ENCODE measurements at regions of chr7 and their contacts with region 1.

Region 1: DNA sequence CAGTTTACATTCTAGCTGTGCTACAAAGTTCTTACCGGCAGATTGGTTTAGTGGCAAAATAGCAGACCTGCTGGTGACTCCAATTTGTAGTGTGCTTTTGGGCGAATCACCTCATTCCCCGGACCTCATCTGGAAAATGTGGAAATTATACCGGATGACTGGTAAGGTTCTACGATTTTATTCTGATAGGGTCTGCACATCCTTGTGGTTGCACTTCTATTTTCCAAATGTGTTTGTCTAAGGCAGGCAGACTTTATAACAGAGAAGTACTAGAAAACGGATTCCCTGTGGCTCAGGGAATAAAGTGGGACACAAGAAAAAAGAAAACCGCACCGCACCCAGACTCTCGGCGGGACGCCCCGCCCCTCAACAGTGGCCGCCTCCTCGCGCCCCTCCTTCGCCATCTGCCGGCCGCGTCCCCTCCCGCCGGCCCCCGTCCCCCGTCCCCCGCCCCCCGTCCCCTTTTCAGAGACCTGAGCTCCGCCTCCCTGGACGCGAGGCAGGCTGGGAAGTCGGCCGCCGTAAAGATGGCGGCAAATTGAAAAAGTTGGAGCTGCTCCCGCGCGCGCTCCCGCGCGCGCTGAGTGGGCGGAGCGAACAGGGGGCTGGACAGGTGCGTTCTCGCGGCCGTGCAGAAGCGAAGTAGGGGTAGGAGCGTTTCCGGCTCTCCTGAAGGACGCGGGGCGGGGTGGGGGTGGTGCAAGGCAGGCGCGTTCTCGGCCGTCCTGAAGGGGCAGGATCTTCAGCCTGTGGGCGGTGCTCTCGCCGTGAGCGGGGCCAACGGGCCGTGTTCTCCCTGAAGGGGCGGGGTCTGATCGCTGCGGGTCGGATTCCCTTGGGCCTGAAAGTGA is 531 bp upstream of the CCM2 start:
- DNase-seq: peak; percentile 83 to 99
- ATAC-seq: peak; percentile 92 to 97
- H3K4me3 ChIP-seq: peak overlapping the region; percentile 85
- H3K27ac ChIP-seq: peak overlapping the region; percentile 84 to 91
- H3K4me1 ChIP-seq: peaks cover 10% of the 10 kb centered on the region
- CTCF ChIP-seq: no peak
- EP300 ChIP-seq: no peak
- POLR2A ChIP-seq: peak; percentile 62
- RAD21 ChIP-seq: peak in 1 of 2 experiments; percentile 25; a peak in 1 of 5 replicates

Region 2: DNA sequence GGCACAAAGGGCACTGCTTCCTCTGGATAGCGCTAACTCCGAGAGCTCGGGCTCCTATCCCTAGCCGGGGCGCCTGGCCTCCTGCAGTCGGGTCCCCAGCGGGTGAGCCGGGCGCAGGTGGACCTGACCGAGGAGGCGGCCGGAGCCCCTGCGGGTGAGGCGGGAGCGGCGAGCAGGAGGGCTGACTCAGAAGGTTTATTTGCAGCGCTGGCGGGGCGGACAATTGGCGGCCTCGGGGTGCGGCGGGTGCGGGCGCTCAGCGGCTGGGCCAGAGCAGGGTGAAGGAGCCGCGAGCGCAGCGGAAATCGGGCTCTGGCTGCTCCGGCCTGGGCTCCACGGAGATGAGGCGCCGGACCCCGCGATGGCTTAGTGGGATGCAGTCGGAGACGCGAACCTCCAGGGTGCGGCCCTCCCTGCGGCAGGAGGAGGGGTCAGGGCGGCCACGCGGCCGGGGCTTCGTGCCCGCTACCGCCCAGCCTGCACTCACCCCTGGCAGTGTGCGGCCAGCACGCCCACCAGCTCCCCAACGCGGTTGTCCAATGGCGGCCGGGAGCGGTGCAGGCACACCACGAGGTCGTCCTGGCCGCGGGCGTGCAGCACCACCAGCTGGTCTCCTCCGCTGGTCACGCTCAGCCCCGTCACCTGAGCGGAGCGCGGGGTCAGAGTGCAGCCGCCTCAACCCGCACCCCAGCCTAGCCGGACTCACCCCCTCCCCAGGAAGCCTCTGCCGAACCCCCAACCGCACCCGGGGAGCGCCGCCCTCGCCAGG is 36.8 kb before region 1 on chr7:
- CTCF ChIA-PET with region 1: no interaction called
- POLR2A ChIA-PET with region 1: no interaction called
- DNase-seq: no peak
- ATAC-seq: no peak; a peak in 1 of 6 replicates
- H3K4me3 ChIP-seq: no peak overlapping the region
- H3K27ac ChIP-seq: no peak overlapping the region
- H3K4me1 ChIP-seq: no peaks in the 10 kb centered on the region
- CTCF ChIP-seq: no peak
- EP300 ChIP-seq: no peak
- POLR2A ChIP-seq: no peak
- RAD21 ChIP-seq: no peak

Region 3: DNA sequence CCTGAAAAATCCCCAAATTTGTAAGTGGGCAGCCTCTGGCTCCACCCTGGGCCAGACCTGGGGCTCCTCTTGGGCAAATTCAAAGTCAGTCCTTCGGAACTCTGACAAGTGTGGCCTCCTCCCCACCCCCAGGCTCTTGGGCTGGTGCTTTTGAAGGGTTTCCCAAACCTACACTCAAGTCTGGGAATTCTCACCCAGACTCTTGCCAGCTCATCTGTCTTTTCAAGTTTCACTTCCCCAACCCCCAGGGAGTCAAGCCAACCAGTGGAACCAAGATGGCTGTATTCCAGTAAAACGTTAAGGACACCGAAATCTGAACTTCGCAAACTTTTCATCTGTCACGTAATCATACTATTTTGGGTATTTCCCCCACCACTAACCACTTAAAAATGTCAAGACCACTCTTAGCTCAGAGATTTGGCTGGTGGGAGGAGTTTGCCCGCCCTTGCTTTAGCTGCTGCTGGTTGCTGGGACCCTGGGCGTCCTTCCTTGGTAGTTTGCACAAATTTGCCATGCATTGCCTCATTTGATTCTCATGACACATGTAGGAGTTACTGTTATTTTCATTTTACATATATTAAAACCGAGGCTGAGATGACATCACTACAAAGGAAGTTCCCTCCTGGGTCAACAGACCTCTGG is 19.0 kb before region 1 on chr7:
- CTCF ChIA-PET with region 1: interaction called, 11 read pairs
- POLR2A ChIA-PET with region 1: interaction called, 12 read pairs
- DNase-seq: no peak
- ATAC-seq: peak in 1 of 2 experiments; percentile 5; a peak in 2 of 6 replicates
- H3K4me3 ChIP-seq: no peak overlapping the region
- H3K27ac ChIP-seq: no peak overlapping the region; a peak in 1 of 6 replicates
- H3K4me1 ChIP-seq: peaks cover 37% of the 10 kb centered on the region
- CTCF ChIP-seq: no peak
- EP300 ChIP-seq: no peak
- POLR2A ChIP-seq: no peak
- RAD21 ChIP-seq: no peak

Region 4: DNA sequence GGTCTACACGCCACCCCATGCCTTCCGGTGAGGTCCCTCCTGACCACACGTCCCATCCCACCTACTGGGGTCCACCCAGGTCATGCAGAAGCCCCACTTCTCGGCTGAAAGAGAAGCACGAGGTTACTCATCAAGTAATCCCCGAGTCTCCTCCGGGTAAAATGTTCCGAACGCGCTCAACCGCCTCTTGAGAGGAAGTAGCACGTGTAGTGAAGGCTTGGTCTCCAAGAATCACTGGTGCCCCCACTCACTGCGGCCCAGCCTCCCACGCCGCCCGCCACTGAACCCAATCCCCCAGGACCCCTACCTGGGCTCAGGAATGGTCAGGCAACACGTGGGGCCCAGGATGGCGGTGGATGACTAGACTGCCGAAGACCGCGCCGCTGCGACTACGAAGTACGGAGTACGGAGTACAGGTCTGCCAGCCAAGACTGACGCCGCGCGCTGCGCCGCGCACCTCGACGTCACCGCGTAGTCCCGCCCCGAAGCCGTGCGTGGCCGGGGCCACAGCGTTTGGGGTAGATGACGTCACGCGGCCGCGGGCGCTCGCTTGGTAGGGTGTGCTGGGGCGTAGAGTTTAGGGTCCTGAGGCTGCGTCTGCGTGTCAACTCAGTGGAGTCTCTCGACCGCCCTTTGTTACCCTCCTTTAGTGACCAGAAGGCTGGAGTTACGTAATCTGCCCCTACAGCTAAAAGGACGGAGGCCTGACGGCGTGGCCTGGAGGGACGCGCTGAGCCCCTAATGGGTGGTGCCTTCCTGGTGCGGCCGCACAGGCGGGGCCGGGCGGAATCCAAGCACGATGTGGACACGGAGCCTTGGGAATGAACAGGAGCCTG is 13.0 kb before region 1 on chr7:
- CTCF ChIA-PET with region 1: interaction called, 11 read pairs
- POLR2A ChIA-PET with region 1: interaction called, 12 read pairs
- DNase-seq: peak; percentile 68 to 95
- ATAC-seq: peak; percentile 96
- H3K4me3 ChIP-seq: peak overlapping the region; percentile 64
- H3K27ac ChIP-seq: peak overlapping the region; percentile 88 to 95
- H3K4me1 ChIP-seq: peaks cover 29% of the 10 kb centered on the region
- CTCF ChIP-seq: no peak
- EP300 ChIP-seq: no peak
- POLR2A ChIP-seq: peak; percentile 99
- RAD21 ChIP-seq: no peak

Region 5: DNA sequence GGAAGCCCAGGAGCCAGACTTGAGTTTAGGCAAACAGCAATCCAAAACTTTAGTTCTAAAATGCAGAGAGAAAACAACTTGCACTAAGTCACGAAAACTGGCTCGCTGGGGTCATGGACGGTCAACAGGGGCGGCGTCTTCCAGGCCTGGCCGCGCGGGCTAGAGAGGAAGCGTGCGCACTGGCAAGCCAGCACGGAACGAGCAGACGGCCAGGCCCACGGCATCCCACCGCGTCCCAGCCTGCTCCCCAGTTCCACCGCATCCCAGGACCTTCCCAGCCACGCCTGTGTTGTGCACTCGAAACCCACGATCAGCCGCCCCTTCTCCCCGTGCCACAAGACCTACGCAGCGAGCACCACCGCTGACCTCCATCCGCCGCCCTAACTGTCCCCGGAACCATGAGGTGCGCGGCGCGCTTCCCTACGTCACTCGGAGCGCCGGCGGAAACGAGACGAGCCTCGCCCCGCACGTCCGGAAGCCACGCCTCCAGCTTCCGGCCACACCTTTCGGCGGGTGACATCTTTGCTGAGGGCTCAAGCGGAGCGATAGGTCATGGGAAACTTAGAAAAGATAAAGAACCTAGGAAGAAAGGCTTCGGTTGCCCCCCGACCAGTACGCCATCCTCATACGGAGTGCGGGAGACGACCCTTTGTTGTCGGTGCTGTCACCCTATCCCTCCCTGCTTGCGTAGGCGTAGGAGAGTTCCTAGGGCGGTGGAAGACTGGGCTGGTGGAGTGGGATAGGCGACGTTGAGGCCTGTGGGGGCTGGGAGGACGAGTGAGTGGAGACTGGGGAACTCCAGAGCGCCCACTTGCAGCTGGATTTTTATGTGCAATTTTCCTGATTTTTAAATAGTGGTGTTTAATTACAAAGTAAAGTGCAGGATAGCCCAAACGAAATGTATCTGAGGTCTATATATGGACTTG is 112.1 kb after region 1 on chr7 and contains the start of gene TBRG4:
- CTCF ChIA-PET with region 1: interaction called, 3 read pairs
- POLR2A ChIA-PET with region 1: interaction called, 14 read pairs
- DNase-seq: peak; percentile 85 to 97
- ATAC-seq: peak; percentile 94 to 96
- H3K4me3 ChIP-seq: peak within 1 kb of the TSS; percentile 86
- H3K27ac ChIP-seq: peak within 1 kb of the TSS; percentile 92 to 96
- H3K4me1 ChIP-seq: peaks cover 28% of the 10 kb centered on the region
- CTCF ChIP-seq: peak; percentile 61
- EP300 ChIP-seq: no peak
- POLR2A ChIP-seq: peak; percentile 94
- RAD21 ChIP-seq: peak in 1 of 2 experiments; percentile 23; a peak in 3 of 5 replicates
- polyA plus RNA-seq, gene TBRG4: 100 and 135 TPM in 2 replicates